Sciatic nerve (tissue), 2 donors: ENCODE measurements at regions of chr4 and their contacts with region 1.

Region 1: GRCh38 chr4:184420881-184421416 is 53.4 kb downstream of the IRF2 start:
- DNase-seq: no peak
- ATAC-seq: no peak

Region 2: GRCh38 chr4:184410748-184411147 is 10.2 kb before region 1 on chr4:
- intact Hi-C with region 1: loop called (anchors 1 kb)
- DNase-seq: no peak
- ATAC-seq: no peak

Region 3: GRCh38 chr4:184514121-184514988 is 93.4 kb after region 1 on chr4:
- intact Hi-C with region 1: no loop called
- DNase-seq: no peak
- ATAC-seq: peak; percentile 82

Region 4: GRCh38 chr4:184937745-184938144 is 516.8 kb after region 1 on chr4:
- intact Hi-C with region 1: no loop called
- DNase-seq: no peak
- ATAC-seq: no peak

Region 5: GRCh38 chr4:185276036-185276435 is 855.1 kb after region 1 on chr4:
- intact Hi-C with region 1: loop called (anchors 5 kb)
- DNase-seq: no peak
- ATAC-seq: no peak